Endothelial cell of umbilical vein (primary cell): ENCODE measurements at regions of chr4 and their contacts with region 1.

Region 1: GRCh38 chr4:94451695-94452475 is at the start of gene PDLIM5:
- DNase-seq: peak; percentile 93
- H3K4me3 ChIP-seq: peak within 1 kb of the TSS; percentile 60 to 99 (median 98)
- H3K27ac ChIP-seq: peak within 1 kb of the TSS; percentile 80
- H3K4me1 ChIP-seq: peaks cover 40% of the 10 kb centered on the region
- H3K27me3 ChIP-seq: no peaks in the 10 kb centered on the region
- CTCF ChIP-seq: no peak
- POLR2A ChIP-seq: peak; percentile 96
- total RNA-seq, gene PDLIM5: 310 and 323 TPM in 2 replicates

Region 2: GRCh38 chr4:94412658-94413038 is 39.2 kb before region 1 on chr4:
- CTCF ChIA-PET with region 1: interaction called, 62 read pairs
- POLR2A ChIA-PET with region 1: interaction called, 4 read pairs
- dilution Hi-C with region 1: no loop called
- intact Hi-C with region 1: loop called (anchors 1 kb)
- DNase-seq: peak; percentile 95
- H3K4me3 ChIP-seq: peak overlapping the region in 1 of 3 experiments; percentile 65
- H3K27ac ChIP-seq: peak overlapping the region; percentile 65
- H3K4me1 ChIP-seq: peaks cover 33% of the 10 kb centered on the region
- H3K27me3 ChIP-seq: no peaks in the 10 kb centered on the region
- CTCF ChIP-seq: no peak
- POLR2A ChIP-seq: no peak

Region 3: DNA sequence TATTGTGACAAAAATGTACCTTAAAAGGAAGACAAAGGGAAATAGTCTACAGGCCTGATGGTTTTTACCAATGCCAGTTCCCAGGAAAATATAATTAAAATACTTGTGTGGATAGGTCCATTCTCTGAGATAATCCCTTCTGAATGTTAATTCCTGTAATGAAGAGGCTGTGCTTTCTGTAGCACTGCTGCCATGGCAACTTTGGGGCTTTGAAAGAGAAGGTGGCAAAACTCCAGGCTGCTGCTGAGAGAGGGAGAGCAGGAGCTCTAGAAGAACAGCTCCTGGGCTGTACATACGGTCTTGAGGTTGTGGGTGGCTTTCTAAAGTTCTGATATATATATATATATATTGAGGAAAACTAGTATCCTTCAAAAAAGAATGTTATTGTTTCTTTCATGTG is 125.3 kb after region 1 on chr4:
- CTCF ChIA-PET with region 1: no interaction called
- POLR2A ChIA-PET with region 1: no interaction called
- dilution Hi-C with region 1: no loop called
- intact Hi-C with region 1: loop called (anchors 5 kb)
- DNase-seq: peak; percentile 70
- H3K4me3 ChIP-seq: no peak overlapping the region
- H3K27ac ChIP-seq: peak overlapping the region; percentile 24
- H3K4me1 ChIP-seq: peaks cover 41% of the 10 kb centered on the region
- H3K27me3 ChIP-seq: no peaks in the 10 kb centered on the region
- CTCF ChIP-seq: no peak
- POLR2A ChIP-seq: no peak

Region 4: GRCh38 chr4:94595879-94596483 is 144.1 kb after region 1 on chr4:
- CTCF ChIA-PET with region 1: interaction called, 3 read pairs
- POLR2A ChIA-PET with region 1: no interaction called
- dilution Hi-C with region 1: no loop called
- intact Hi-C with region 1: loop called (anchors 1 kb)
- DNase-seq: peak; percentile 76
- H3K4me3 ChIP-seq: no peak overlapping the region
- H3K27ac ChIP-seq: no peak overlapping the region
- H3K4me1 ChIP-seq: peaks cover 11% of the 10 kb centered on the region
- H3K27me3 ChIP-seq: no peaks in the 10 kb centered on the region
- CTCF ChIP-seq: peak; percentile 26 to 28
- POLR2A ChIP-seq: no peak